Left cardiac atrium (tissue), 4 donors: ENCODE measurements at regions of chr1 and their contacts with region 1.

Region 1: DNA sequence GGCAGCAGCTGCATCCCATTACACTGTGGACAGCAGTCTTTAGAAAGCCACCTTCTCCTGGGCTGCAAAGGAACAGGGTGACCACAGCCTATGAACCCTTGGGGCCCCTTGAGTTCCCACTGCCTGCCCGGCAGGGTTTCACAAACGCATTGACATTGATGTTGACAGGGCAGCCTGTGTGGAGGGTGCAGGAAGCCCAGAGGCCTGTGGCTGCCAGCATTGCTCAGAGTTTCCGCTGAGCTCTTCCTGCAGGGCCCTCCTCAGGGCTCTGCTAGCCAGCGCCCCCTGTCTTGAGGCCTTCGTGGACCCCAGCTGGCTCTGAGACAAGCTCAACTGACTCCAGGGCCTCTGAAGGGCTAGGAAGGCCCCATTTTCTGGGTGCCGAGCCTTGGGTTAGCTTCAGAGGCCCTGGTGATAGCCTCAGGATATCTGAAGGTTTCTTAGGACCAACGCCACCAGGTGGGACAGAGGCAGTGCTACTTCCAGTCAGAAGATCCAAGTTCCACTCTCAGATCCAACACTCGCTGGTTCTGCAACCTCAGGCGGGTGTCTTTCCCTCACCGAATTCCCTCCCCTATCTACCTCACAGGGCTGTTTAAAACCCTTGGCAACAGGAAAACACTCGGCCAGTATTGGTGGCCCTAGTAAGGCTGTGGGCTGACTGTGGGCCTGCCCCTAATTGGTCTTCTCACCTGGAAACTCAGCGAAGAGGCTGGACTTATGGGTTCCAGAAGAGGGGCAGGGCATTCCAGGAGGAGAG is 27.2 kb upstream of the EPS8L3 start:
- DNase-seq: peak; percentile 81
- ATAC-seq: peak; percentile 46 to 66

Region 2: DNA sequence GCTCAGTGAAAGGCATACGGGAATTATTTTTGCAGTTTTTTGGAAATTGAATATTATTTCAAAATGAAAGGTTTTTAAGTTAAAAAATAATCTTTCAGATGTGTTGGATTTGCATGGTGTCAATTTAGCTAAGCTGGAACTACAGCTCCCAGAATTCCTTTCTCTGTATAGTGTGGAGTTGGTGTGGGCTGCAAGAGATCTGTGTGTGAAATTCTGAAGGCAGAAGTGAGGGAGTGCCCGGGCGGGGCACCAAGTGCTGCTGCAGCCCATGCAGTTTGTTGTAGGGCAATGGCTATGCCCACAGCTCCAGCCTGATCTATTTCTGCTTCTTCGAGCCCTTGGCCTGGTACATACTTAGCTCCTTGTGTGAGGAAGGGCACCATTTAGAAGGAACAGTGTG is 59.3 kb after region 1 on chr1:
- intact Hi-C with region 1: no loop called
- DNase-seq: no peak
- ATAC-seq: peak in 1 of 2 donors; percentile 38

Region 3: GRCh38 chr1:109895720-109896504 is 105.0 kb after region 1 on chr1:
- intact Hi-C with region 1: loop called in 1 of 2 experiments (anchors 10 kb)
- DNase-seq: peak; percentile 76
- ATAC-seq: peak; percentile 69 to 79

Region 4: DNA sequence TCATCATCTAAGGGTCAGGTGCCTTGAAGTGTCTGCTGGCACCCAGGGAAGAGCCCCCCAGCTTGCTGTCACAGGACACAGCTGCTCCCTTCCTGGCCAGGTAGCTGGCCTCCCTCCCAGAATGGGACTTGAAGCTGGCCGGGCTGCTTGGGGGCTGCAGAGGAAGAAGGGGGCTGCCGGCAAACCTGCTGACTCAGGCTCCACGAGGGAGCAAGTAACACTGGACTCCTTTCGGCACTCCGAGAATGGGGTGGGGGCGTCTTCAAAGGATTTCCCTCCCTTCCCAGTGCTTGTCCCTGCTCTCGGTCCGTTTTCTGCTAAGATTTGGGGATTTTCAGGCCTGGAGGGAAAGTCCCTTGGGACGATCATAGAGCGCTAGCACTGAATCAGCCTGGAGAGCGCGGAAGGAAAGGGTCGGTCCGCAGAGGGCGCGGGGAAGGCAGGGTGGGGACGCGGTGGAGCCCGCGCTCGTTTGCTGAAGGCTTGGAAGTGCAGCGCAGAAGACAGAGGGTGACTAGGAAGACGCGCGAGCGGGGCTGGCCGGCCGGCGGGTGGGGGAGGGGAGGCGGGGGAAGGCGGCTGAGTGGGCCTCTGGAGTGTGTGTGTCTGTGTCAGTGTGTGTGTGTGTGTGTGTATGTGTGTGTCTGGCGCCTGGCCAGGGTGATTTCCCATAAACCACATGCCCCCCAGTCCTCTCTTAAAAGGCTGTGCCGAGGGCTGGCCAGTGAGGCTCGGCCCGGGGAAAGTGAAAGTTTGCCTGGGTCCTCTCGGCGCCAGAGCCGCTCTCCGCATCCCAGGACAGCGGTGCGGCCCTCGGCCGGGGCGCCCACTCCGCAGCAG is 119.4 kb after region 1 on chr1 and contains the start of gene CSF1:
- intact Hi-C with region 1: loop called in 1 of 2 experiments (anchors 5 kb)
- DNase-seq: peak; percentile 84
- ATAC-seq: peak; percentile 71 to 76
- total RNA-seq, gene CSF1: 30.8 to 44.1 TPM